HEK293 (cell line): ENCODE measurements at regions of chr9 and their contacts with region 1.

Region 1: GRCh38 chr9:22238809-22239684 is 207.6 kb upstream of the DMRTA1 start:
- H3K4me3 ChIP-seq: peak overlapping the region; percentile 9; the same call in 1 of the 2 replicates
- H3K27ac ChIP-seq: peak overlapping the region; percentile 81
- H3K4me1 ChIP-seq: peaks cover 22% of the 10 kb centered on the region
- CTCF ChIP-seq: no peak

Region 2: GRCh38 chr9:21995177-21996086 is 243.6 kb before region 1 on chr9:
- CTCF ChIA-PET with region 1: interaction called, 12 read pairs
- POLR2A ChIA-PET with region 1: interaction called, 14 read pairs
- H3K4me3 ChIP-seq: peak overlapping the region; percentile 59
- H3K27ac ChIP-seq: peak overlapping the region; percentile 99
- H3K4me1 ChIP-seq: peaks cover 5% of the 10 kb centered on the region; the same call in 1 of the 2 replicates
- CTCF ChIP-seq: no peak

Region 3: DNA sequence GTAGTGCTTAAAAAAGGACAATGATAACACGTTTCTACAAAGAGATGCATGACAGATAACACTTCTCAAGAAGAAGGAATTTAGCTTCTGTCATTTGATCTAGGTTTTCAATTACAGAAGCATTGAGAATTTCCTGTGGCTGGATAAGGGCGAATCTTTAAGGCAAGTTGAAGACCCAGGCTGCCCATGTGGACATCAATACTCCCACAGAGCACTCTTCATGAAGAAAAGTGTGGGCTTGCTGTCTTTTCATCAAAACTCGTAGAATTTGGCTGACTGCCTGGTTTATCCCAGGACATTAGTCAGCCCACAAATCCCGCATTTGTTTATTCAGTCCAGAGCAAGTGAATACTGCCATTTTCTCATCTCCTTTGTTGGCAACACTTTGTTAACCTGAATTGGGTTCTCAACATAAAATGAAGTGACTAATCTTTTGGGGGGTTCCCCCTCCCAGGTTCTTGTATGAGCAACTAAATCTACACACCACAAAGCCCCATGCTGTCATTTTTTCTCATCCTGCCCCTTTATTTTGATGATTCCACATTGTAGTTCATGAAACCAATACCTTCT is 186.6 kb before region 1 on chr9:
- CTCF ChIA-PET with region 1: interaction called, 29 read pairs
- POLR2A ChIA-PET with region 1: interaction called, 8 read pairs
- H3K4me3 ChIP-seq: no peak overlapping the region
- H3K27ac ChIP-seq: peak overlapping the region; percentile 64
- H3K4me1 ChIP-seq: peaks cover 15% of the 10 kb centered on the region
- CTCF ChIP-seq: no peak

Region 4: GRCh38 chr9:22119537-22120158 is 119.4 kb before region 1 on chr9:
- CTCF ChIA-PET with region 1: interaction called, 46 read pairs
- POLR2A ChIA-PET with region 1: interaction called, 4 read pairs
- H3K4me3 ChIP-seq: no peak overlapping the region
- H3K27ac ChIP-seq: no peak overlapping the region
- H3K4me1 ChIP-seq: peaks cover 14% of the 10 kb centered on the region; the same call in 1 of the 2 replicates
- CTCF ChIP-seq: no peak

Region 5: GRCh38 chr9:22211593-22212360 is 27.3 kb before region 1 on chr9:
- CTCF ChIA-PET with region 1: interaction called, 16 read pairs
- POLR2A ChIA-PET with region 1: interaction called, 4 read pairs
- H3K4me3 ChIP-seq: no peak overlapping the region
- H3K27ac ChIP-seq: 0 out of 2 replicates have a peak overlapping the region, but pooled peaks have one; percentile 30
- H3K4me1 ChIP-seq: peaks cover 30% of the 10 kb centered on the region
- CTCF ChIP-seq: no peak

Region 6: GRCh38 chr9:22332202-22332601 is 93.2 kb after region 1 on chr9:
- CTCF ChIA-PET with region 1: no interaction called
- POLR2A ChIA-PET with region 1: no interaction called
- H3K4me3 ChIP-seq: no peak overlapping the region
- H3K27ac ChIP-seq: no peak overlapping the region
- H3K4me1 ChIP-seq: no peaks in the 10 kb centered on the region
- CTCF ChIP-seq: no peak